HepG2 (cell line): ENCODE measurements at regions of chr6 and their contacts with region 1.

Region 1: DNA sequence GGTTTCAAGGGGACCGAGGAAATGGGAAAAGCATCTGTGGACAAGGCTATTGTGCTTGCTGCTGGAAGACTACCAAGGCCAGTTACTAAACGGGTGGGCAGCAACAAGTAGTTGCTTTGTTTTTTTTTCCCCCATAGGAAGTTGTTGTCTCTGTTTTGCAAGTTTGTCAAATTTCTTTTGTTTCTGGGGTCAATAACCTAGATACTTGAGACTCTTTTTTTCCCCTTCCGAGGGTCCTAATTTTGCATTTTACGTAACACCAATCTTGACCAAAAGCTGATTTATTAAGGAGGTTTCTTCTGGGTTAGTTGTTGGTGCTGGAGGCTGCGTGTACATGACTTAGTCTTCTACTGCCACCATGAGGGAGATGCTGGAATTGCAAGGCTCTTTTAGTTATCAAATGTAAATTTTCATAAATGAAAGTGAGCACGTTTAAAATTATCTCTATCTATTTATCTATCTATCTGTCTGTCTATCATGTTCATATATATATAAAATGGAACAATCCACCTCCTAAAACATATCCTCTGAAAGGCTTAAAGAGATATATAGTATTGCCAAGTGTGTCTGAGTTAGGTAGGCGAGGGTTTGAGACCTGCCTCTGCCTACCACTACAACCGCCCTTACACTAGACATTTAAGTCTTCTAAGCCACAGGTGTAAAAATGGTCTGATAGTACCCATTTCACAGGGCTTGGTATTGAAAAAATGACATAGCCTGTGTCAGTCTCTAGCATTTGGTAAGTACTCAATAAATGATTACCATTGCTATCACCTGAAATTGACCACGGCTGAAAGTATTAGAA is 60.2 kb downstream of the GCLC start:
- DNase-seq: peak; percentile 67
- ATAC-seq: peak; percentile 76
- H3K4me3 ChIP-seq: no peak overlapping the region
- H3K27ac ChIP-seq: no peak overlapping the region
- H3K4me1 ChIP-seq: peaks cover 17% of the 10 kb centered on the region
- H3K27me3 ChIP-seq: no peaks in the 10 kb centered on the region; a peak in 1 of 5 replicates
- CTCF ChIP-seq: peak; percentile 87
- EP300 ChIP-seq: no peak
- POLR2A ChIP-seq: no peak
- RAD21 ChIP-seq: peak; percentile 86

Region 2: DNA sequence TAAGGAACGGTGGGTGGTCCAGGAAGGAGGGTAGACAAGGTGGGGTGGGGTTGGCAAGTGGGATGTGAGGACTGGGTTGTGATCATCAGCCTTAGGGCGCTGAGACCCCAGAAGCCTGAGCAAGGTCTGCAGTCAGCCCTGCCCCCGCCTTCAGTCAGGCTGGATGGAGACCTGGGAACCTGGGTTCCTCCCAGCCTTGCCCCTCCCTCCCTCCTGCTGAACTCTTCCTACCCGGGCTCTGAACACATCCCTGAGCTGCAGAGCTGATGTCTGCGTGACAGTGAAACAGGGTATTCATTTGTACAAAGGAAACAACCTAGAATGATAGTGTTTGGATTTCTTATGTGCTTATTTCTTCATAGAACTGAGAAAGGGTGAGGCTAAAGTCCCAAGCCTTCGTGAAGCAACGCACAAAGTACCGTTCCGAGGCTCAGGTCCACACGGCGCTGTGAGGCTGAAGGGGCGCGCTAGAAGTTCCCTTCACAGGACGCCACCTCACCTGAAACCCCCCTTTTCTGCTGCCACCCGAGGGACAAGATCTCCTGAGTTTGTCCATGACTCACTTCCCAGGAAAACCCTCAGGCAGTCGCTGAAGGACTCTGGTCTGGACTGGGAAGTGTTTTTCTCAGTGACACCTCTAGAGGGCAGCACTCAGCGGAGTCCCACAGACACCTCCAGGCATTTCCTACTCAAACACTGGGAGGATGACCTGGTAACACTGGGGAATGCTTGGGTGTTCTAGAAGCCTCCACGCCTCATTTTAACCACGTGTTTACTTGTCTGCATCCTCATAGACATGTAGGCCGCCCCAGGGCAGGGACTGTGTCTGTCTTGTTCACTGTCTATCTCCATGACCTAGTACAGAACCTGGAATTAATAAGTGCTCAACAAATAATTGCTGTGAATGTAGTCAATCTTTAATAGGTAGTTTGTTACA is 645.3 kb before region 1 on chr6:
- CTCF ChIA-PET with region 1: interaction called, 4 read pairs
- POLR2A ChIA-PET with region 1: no interaction called
- in situ Hi-C with region 1: no loop called
- intact Hi-C with region 1: loop called (anchors 1 kb)
- DNase-seq: peak; percentile 79
- ATAC-seq: peak; percentile 98
- H3K4me3 ChIP-seq: peak overlapping the region; percentile 30 to 71 (median 56); a peak in 5 of 6 replicates
- H3K27ac ChIP-seq: no peak overlapping the region
- H3K4me1 ChIP-seq: peaks cover 6% of the 10 kb centered on the region; the same call in 1 of the 2 replicates
- H3K27me3 ChIP-seq: 0 out of 5 replicates have a peak, but pooled peaks cover 0 to 1% of the 10 kb centered on the region in 2 experiments
- CTCF ChIP-seq: peak; percentile 94
- EP300 ChIP-seq: no peak
- POLR2A ChIP-seq: no peak
- RAD21 ChIP-seq: peak; percentile 73

Region 3: GRCh38 chr6:53179961-53180651 is 304.6 kb before region 1 on chr6:
- CTCF ChIA-PET with region 1: interaction called, 5 read pairs
- POLR2A ChIA-PET with region 1: no interaction called
- in situ Hi-C with region 1: loop called (anchors 5 kb)
- intact Hi-C with region 1: no loop called
- DNase-seq: no peak
- ATAC-seq: no peak
- H3K4me3 ChIP-seq: no peak overlapping the region
- H3K27ac ChIP-seq: no peak overlapping the region
- H3K4me1 ChIP-seq: no peaks in the 10 kb centered on the region
- H3K27me3 ChIP-seq: 0 out of 5 replicates have a peak, but pooled peaks cover 0 to 6% of the 10 kb centered on the region in 2 experiments
- CTCF ChIP-seq: no peak
- EP300 ChIP-seq: no peak
- POLR2A ChIP-seq: no peak
- RAD21 ChIP-seq: no peak

Region 4: DNA sequence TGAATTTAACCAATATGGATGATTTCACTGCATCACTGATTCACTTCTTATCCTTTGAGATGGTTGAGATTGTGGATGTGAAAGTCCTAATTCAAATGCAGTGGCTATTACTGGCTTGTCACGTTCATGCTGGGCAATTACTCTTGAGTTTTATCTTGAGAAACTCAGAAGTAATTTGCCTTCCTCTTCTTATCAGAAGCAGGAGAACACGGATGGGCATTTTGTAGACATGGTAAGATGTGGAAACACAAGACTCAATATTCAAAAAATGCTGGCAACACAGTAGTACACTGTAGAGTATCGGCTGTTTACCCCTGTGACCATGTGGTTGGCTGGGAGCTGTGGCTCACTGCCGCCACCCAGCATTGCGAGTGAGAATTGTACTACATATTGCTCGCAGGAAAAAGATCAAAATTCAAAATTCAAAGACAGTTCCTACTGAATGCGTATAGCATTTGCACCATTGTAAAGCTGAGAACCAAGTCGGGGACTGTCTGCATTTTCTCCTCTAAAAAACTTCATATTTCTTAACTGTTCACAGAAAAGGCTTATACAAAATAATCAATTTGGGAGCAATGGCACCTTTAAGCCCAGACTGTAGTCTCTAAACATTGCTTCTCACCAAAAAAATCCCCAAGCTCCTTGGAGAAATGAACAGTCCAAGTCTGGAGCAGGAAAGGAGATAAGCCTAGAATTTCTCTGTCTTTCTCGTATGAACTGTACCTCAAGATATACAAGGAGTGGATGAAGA is 74.0 kb before region 1 on chr6:
- CTCF ChIA-PET with region 1: no interaction called
- POLR2A ChIA-PET with region 1: no interaction called
- in situ Hi-C with region 1: no loop called
- intact Hi-C with region 1: loop called (anchors 1 kb)
- DNase-seq: peak; percentile 56
- ATAC-seq: peak; percentile 100
- H3K4me3 ChIP-seq: no peak overlapping the region
- H3K27ac ChIP-seq: no peak overlapping the region
- H3K4me1 ChIP-seq: peaks cover 4% of the 10 kb centered on the region; the same call in 1 of the 2 replicates
- H3K27me3 ChIP-seq: peaks cover 0 to 4% of the 10 kb centered on the region in 2 experiments; a peak in 1 of 5 replicates
- CTCF ChIP-seq: peak; percentile 96
- EP300 ChIP-seq: no peak
- POLR2A ChIP-seq: no peak
- RAD21 ChIP-seq: peak; percentile 94

Region 5: GRCh38 chr6:53513519-53513966 is 28.9 kb after region 1 on chr6:
- CTCF ChIA-PET with region 1: no interaction called
- POLR2A ChIA-PET with region 1: no interaction called
- in situ Hi-C with region 1: no loop called
- intact Hi-C with region 1: no loop called
- DNase-seq: peak; percentile 19
- ATAC-seq: peak; percentile 59
- H3K4me3 ChIP-seq: no peak overlapping the region
- H3K27ac ChIP-seq: peak overlapping the region; percentile 39
- H3K4me1 ChIP-seq: peaks cover 59% of the 10 kb centered on the region
- H3K27me3 ChIP-seq: no peaks in the 10 kb centered on the region
- CTCF ChIP-seq: peak; percentile 41; the same call in 1 of the 2 replicates
- EP300 ChIP-seq: 0 out of 4 replicates have a peak, but pooled peaks of 1 of the 2 experiments have one; percentile 8
- POLR2A ChIP-seq: no peak
- RAD21 ChIP-seq: no peak